Left cardiac atrium (tissue), 4 donors: ENCODE measurements at regions of chr9 and their contacts with region 1.

Region 1: GRCh38 chr9:35563791-35564197 is 41.3 kb upstream of the TESK1 start:
- DNase-seq: peak; percentile 71
- ATAC-seq: peak; percentile 75 to 77

Region 2: DNA sequence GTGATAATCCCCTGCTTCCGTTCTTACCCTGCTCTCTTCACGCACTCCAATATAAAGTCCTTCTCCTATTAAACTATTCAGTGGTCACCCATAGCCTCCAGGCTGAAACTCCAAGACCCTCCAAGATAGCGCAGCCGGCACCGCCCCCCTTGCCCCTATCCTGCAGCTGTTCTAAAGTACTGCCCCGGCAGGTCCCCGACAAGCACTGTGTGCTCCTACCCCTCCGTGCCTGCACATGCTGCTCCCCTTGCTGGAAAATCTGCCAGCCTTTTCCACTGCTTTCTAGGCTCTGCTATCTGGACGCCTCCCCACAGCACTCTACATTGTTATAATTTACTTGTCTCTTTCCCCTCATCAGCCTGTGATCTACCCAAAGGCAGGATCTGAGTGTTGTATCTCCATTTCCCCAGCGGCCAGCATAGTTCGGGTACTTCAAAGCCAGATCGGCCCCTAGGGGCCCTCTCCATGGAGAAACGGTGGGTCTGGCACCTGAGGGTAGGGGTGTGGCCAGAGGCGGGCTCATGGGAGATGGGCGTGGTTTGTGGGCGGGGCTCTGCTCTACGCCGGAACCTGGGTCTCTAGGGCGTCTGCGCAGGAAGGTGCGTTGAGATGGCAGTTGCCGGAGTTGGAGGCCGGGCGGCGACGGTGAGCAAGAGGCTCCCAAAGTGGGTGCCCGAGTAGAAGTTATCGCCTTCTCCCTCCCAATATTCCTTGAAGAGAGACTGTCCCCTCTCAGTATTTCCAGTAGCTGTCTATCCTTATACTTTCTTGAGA is 157.4 kb before region 1 on chr9:
- intact Hi-C with region 1: loop called in 1 of 2 experiments (anchors 10 kb)
- DNase-seq: peak; percentile 72
- ATAC-seq: peak; percentile 93 to 95